Activated B cell treated with CpG ODN at 0.5 μM for 24 hours (primary cell): ENCODE measurements at regions of chr6 and their contacts with region 1.

Region 1: GRCh38 chr6:129490521-129491245 is 219.3 kb downstream of the ARHGAP18 start:
- DNase-seq: no peak
- ATAC-seq: peak; percentile 88
- H3K4me3 Mint-ChIP-seq: peak overlapping the region; percentile 82
- H3K27ac Mint-ChIP-seq: peak overlapping the region; percentile 97
- H3K4me1 Mint-ChIP-seq: peaks cover 28% of the 10 kb centered on the region
- H3K27me3 Mint-ChIP-seq: no peaks in the 10 kb centered on the region
- CTCF ChIP-seq: no peak

Region 2: DNA sequence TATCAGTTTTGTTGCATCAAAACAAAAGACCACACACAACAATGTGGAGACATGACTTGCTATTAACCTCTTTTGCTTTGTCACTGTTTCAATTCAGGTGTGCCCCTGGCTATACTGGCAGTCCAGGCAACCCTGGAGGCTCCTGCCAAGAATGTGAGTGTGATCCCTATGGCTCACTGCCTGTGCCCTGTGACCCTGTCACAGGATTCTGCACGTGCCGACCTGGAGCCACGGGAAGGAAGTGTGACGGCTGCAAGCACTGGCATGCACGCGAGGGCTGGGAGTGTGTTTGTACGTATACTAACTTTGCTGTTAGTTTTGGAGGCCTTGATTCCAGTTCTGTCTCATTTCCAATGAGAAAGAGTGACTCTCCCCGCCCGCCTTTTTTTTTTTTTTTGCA is 137.6 kb before region 1 on chr6:
- CTCF ChIA-PET with region 1: no interaction called
- POLR2A ChIA-PET with region 1: no interaction called
- intact Hi-C with region 1: no loop called
- DNase-seq: no peak
- ATAC-seq: no peak
- H3K4me3 Mint-ChIP-seq: no peak overlapping the region
- H3K27ac Mint-ChIP-seq: no peak overlapping the region
- H3K4me1 Mint-ChIP-seq: no peaks in the 10 kb centered on the region
- H3K27me3 Mint-ChIP-seq: peaks cover 7% of the 10 kb centered on the region
- CTCF ChIP-seq: no peak

Region 3: GRCh38 chr6:129393654-129394053 is 97.0 kb before region 1 on chr6:
- CTCF ChIA-PET with region 1: no interaction called
- POLR2A ChIA-PET with region 1: no interaction called
- intact Hi-C with region 1: loop called (anchors 2 kb)
- DNase-seq: no peak
- ATAC-seq: peak; percentile 92
- H3K4me3 Mint-ChIP-seq: peak overlapping the region; percentile 9
- H3K27ac Mint-ChIP-seq: no peak overlapping the region
- H3K4me1 Mint-ChIP-seq: peaks cover 23% of the 10 kb centered on the region
- H3K27me3 Mint-ChIP-seq: peaks cover 5% of the 10 kb centered on the region
- CTCF ChIP-seq: no peak

Region 4: GRCh38 chr6:129657483-129657882 is 166.8 kb after region 1 on chr6:
- CTCF ChIA-PET with region 1: no interaction called
- POLR2A ChIA-PET with region 1: no interaction called
- intact Hi-C with region 1: no loop called
- DNase-seq: no peak
- ATAC-seq: no peak
- H3K4me3 Mint-ChIP-seq: no peak overlapping the region
- H3K27ac Mint-ChIP-seq: no peak overlapping the region
- H3K4me1 Mint-ChIP-seq: peaks cover 6% of the 10 kb centered on the region
- H3K27me3 Mint-ChIP-seq: no peaks in the 10 kb centered on the region
- CTCF ChIP-seq: no peak

Region 5: GRCh38 chr6:129683601-129684322 is 193.1 kb after region 1 on chr6:
- CTCF ChIA-PET with region 1: no interaction called
- POLR2A ChIA-PET with region 1: no interaction called
- intact Hi-C with region 1: loop called (anchors 1 kb)
- DNase-seq: no peak
- ATAC-seq: peak; percentile 99
- H3K4me3 Mint-ChIP-seq: peak overlapping the region; percentile 50
- H3K27ac Mint-ChIP-seq: peak overlapping the region; percentile 76
- H3K4me1 Mint-ChIP-seq: peaks cover 50% of the 10 kb centered on the region
- H3K27me3 Mint-ChIP-seq: no peaks in the 10 kb centered on the region
- CTCF ChIP-seq: no peak

Region 6: GRCh38 chr6:129748212-129748900 is 257.7 kb after region 1 on chr6:
- CTCF ChIA-PET with region 1: no interaction called
- POLR2A ChIA-PET with region 1: interaction called, 3 read pairs
- intact Hi-C with region 1: loop called (anchors 2 kb)
- DNase-seq: no peak
- ATAC-seq: peak; percentile 89
- H3K4me3 Mint-ChIP-seq: peak overlapping the region; percentile 66
- H3K27ac Mint-ChIP-seq: peak overlapping the region; percentile 94
- H3K4me1 Mint-ChIP-seq: peaks cover 50% of the 10 kb centered on the region
- H3K27me3 Mint-ChIP-seq: no peaks in the 10 kb centered on the region
- CTCF ChIP-seq: no peak

Region 7: GRCh38 chr6:129875610-129876520 is 385.2 kb after region 1 on chr6:
- CTCF ChIA-PET with region 1: no interaction called
- POLR2A ChIA-PET with region 1: no interaction called
- intact Hi-C with region 1: loop called (anchors 5 kb)
- DNase-seq: no peak
- ATAC-seq: peak; percentile 72
- H3K4me3 Mint-ChIP-seq: peak overlapping the region; percentile 52
- H3K27ac Mint-ChIP-seq: peak overlapping the region; percentile 27
- H3K4me1 Mint-ChIP-seq: peaks cover 29% of the 10 kb centered on the region
- H3K27me3 Mint-ChIP-seq: no peaks in the 10 kb centered on the region
- CTCF ChIP-seq: no peak

Region 8: GRCh38 chr6:130115036-130115435 is 624.4 kb after region 1 on chr6:
- CTCF ChIA-PET with region 1: no interaction called
- POLR2A ChIA-PET with region 1: no interaction called
- intact Hi-C with region 1: loop called (anchors 5 kb)
- DNase-seq: no peak
- ATAC-seq: peak; percentile 91
- H3K4me3 Mint-ChIP-seq: peak overlapping the region; percentile 73
- H3K27ac Mint-ChIP-seq: peak overlapping the region; percentile 96
- H3K4me1 Mint-ChIP-seq: peaks cover 79% of the 10 kb centered on the region
- H3K27me3 Mint-ChIP-seq: no peaks in the 10 kb centered on the region
- CTCF ChIP-seq: no peak

Region 9: GRCh38 chr6:131135244-131136020 is 1644.7 kb after region 1 on chr6 and contains the start of gene AKAP7:
- CTCF ChIA-PET with region 1: no interaction called
- POLR2A ChIA-PET with region 1: no interaction called
- intact Hi-C with region 1: loop called (anchors 5 kb)
- DNase-seq: peak; percentile 68
- ATAC-seq: peak; percentile 76
- H3K4me3 Mint-ChIP-seq: peak within 1 kb of the TSS; percentile 96
- H3K27ac Mint-ChIP-seq: peak within 1 kb of the TSS; percentile 95
- H3K4me1 Mint-ChIP-seq: peaks cover 26% of the 10 kb centered on the region
- H3K27me3 Mint-ChIP-seq: no peaks in the 10 kb centered on the region
- CTCF ChIP-seq: no peak
- total RNA-seq, gene AKAP7: 4.1 TPM in 2 replicates